ENCODE measurements at regions of chr10 and their contacts with region 1.

Region 1: GRCh38 chr10:22193945-22194344 is 23.9 kb downstream of the EBLN1 start:
- DNase-seq: no peak
- H3K4me3 ChIP-seq: no peak overlapping the region
- H3K27ac ChIP-seq: no peak overlapping the region
- H3K4me1 ChIP-seq: no peaks in the 10 kb centered on the region
- H3K27me3 ChIP-seq: no peaks in the 10 kb centered on the region
- CTCF ChIP-seq: no peak
- EP300 ChIP-seq: no peak
- POLR2A ChIP-seq: no peak

Region 2: DNA sequence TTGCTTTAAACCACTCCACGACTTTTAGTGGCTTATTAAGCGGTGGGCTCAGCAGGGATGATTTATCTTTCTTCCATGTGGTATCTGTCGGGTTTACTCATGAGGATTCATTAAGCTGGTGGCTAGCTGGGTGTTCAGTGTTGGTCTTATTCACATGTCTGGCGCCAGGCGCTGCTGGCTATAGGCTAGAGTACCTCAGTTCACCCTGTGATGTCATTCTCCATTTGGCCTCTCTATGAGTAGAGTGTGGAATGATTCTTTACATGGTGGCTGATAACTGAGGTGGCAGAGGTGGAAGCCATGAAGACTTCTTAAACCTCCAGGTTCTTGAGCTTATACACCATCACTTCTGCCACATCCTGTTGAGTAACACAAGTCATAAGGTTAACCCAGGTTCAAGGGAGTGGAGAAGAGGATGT is 544.5 kb before region 1 on chr10:
- intact Hi-C with region 1: no loop called
- DNase-seq: no peak
- H3K4me3 ChIP-seq: no peak overlapping the region
- H3K27ac ChIP-seq: no peak overlapping the region
- H3K4me1 ChIP-seq: no peaks in the 10 kb centered on the region
- H3K27me3 ChIP-seq: no peaks in the 10 kb centered on the region
- CTCF ChIP-seq: no peak
- EP300 ChIP-seq: no peak
- POLR2A ChIP-seq: no peak

Region 3: DNA sequence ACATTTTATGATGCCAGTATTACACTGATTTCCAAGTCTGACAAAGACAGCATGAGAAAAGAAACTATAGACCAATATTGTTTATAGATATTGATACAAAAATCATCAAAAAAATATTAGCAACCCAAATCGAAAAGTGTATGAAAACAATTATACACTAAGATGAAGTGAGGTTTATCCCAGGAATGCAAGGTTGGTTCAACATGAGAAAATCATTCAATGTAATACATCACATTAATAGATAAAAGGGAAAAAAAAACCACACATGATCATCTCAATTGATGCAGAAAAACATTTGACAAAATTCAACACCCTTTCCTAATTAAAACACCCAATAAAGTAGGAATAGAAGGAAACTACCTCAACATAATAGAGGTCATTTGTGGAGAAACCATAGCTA is 344.3 kb before region 1 on chr10:
- intact Hi-C with region 1: no loop called
- DNase-seq: no peak
- H3K4me3 ChIP-seq: no peak overlapping the region
- H3K27ac ChIP-seq: no peak overlapping the region
- H3K4me1 ChIP-seq: no peaks in the 10 kb centered on the region
- H3K27me3 ChIP-seq: no peaks in the 10 kb centered on the region
- CTCF ChIP-seq: no peak
- EP300 ChIP-seq: no peak
- POLR2A ChIP-seq: no peak

Region 4: GRCh38 chr10:22218451-22218850 is 24.5 kb after region 1 on chr10:
- intact Hi-C with region 1: loop called in 1 of 4 experiments (anchors 2 kb)
- DNase-seq: no peak
- H3K4me3 ChIP-seq: no peak overlapping the region
- H3K27ac ChIP-seq: no peak overlapping the region
- H3K4me1 ChIP-seq: no peaks in the 10 kb centered on the region
- H3K27me3 ChIP-seq: no peaks in the 10 kb centered on the region
- CTCF ChIP-seq: no peak
- EP300 ChIP-seq: no peak
- POLR2A ChIP-seq: no peak

Region 5: DNA sequence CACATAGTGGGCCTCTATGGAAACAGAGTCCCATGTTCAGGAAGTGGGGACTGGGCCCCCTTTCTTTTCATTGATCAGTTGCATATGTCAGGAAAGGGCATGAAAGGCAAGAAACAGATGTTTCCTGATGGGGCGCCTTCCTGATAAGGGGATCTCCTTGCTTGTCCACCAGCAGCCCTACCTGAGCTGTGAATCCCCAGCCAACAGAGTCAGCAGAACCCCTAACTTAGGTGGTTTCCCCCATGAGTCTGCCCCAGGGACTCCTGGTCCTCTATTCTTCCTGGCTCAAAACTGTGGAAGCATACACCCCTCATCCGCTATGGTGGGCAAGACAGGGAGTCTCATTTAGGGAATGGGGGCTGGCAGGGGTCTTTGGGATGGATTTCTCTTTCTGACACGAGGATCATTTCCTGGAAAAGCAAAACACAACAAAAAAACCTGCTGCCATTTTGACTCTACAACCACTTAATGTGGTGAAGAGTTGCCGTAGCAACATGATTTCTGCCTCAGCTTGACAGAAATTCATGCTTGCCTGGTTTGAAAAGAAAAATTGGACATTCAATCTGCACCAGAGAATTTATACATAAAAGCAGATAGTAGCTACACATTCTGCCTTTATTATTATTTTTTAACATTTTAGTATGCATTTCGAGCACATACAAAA is 271.2 kb after region 1 on chr10:
- intact Hi-C with region 1: no loop called
- DNase-seq: no peak
- H3K4me3 ChIP-seq: no peak overlapping the region
- H3K27ac ChIP-seq: no peak overlapping the region
- H3K4me1 ChIP-seq: no peaks in the 10 kb centered on the region
- H3K27me3 ChIP-seq: no peaks in the 10 kb centered on the region
- CTCF ChIP-seq: no peak
- EP300 ChIP-seq: no peak
- POLR2A ChIP-seq: no peak

Measured in ovary (tissue), 10 donors.